ENCODE measurements at regions of chr1 and their contacts with region 1.

Region 1: GRCh38 chr1:193806079-193807048 is 620.0 kb upstream of the B3GALT2 start:
- DNase-seq: no peak
- ATAC-seq: no peak
- H3K4me3 ChIP-seq: no peak overlapping the region
- H3K4me3 Mint-ChIP-seq: no peak overlapping the region
- H3K27ac ChIP-seq: no peak overlapping the region
- H3K27ac Mint-ChIP-seq: no peak overlapping the region
- H3K4me1 ChIP-seq: no peaks in the 10 kb centered on the region
- H3K4me1 Mint-ChIP-seq: no peaks in the 10 kb centered on the region
- H3K27me3 ChIP-seq: no peaks in the 10 kb centered on the region
- H3K27me3 Mint-ChIP-seq: no peaks in the 10 kb centered on the region
- CTCF ChIP-seq: no peak

Region 2: GRCh38 chr1:193819376-193819775 is 13.0 kb after region 1 on chr1:
- CTCF ChIA-PET with region 1: no interaction called
- POLR2A ChIA-PET with region 1: interaction called, 10 read pairs
- intact Hi-C with region 1: no loop called
- DNase-seq: no peak
- ATAC-seq: no peak
- H3K4me3 ChIP-seq: no peak overlapping the region
- H3K4me3 Mint-ChIP-seq: no peak overlapping the region
- H3K27ac ChIP-seq: no peak overlapping the region
- H3K27ac Mint-ChIP-seq: no peak overlapping the region
- H3K4me1 ChIP-seq: no peaks in the 10 kb centered on the region
- H3K4me1 Mint-ChIP-seq: no peaks in the 10 kb centered on the region
- H3K27me3 ChIP-seq: no peaks in the 10 kb centered on the region
- H3K27me3 Mint-ChIP-seq: no peaks in the 10 kb centered on the region
- CTCF ChIP-seq: no peak